Cardiac septum (tissue), 1 donor: ENCODE measurements at regions of chr7 and their contacts with region 1.

Region 1: DNA sequence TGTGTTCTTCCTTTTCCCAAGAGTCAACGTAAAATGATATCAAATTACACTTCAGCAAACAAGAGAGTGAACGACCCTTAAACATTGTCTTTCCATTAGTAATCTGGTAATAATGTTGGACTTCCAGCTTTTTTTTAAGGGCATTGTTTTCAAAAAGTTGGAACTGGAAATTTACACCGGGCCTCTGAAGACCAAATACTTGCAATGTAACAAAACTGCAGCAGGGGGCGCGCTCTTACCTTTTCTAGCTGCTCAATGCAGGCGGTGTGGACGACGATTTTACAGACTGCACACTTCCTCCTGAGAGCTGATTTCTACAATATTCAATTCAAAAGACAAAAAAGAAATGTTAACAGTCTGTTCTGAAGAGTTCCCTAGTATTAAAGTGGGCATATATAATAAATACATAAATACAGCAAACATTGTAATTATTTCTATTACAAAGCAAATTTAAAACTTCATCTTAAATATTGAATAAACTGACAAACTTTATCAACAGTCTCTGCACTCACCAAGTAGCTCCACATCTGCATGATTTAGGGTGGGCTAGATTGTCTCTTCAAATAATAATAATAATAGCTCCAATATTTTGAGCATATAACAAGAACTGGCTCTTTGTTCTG is 190.4 kb downstream of the DGKI start:
- DNase-seq: peak; percentile 84

Region 2: GRCh38 chr7:137717811-137718271 is 61.5 kb after region 1 on chr7:
- intact Hi-C with region 1: loop called (anchors 5 kb)
- DNase-seq: no peak

Region 3: GRCh38 chr7:138008547-138009349 is 352.4 kb after region 1 on chr7:
- intact Hi-C with region 1: loop called (anchors 5 kb)
- DNase-seq: no peak